Activated CD4-positive, alpha-beta T cell treated with anti-CD3 and anti-CD28 coated beads for 36 hours (primary cell): ENCODE measurements at regions of chr12 and their contacts with region 1.

Region 1: GRCh38 chr12:43776498-43776897 is 17.7 kb downstream of the IRAK4 start:
- DNase-seq: no peak
- ATAC-seq: peak; percentile 57
- H3K4me3 Mint-ChIP-seq: no peak overlapping the region
- H3K27ac Mint-ChIP-seq: no peak overlapping the region
- H3K4me1 Mint-ChIP-seq: no peaks in the 10 kb centered on the region
- H3K27me3 Mint-ChIP-seq: no peaks in the 10 kb centered on the region

Region 2: GRCh38 chr12:43766291-43766690 is 10.2 kb before region 1 on chr12:
- CTCF ChIA-PET with region 1: interaction called, 10 read pairs
- POLR2A ChIA-PET with region 1: no interaction called
- intact Hi-C with region 1: no loop called
- DNase-seq: no peak
- ATAC-seq: no peak
- H3K4me3 Mint-ChIP-seq: no peak overlapping the region
- H3K27ac Mint-ChIP-seq: no peak overlapping the region
- H3K4me1 Mint-ChIP-seq: peaks cover 26% of the 10 kb centered on the region
- H3K27me3 Mint-ChIP-seq: no peaks in the 10 kb centered on the region

Region 3: GRCh38 chr12:43882578-43883178 is 106.2 kb after region 1 on chr12:
- CTCF ChIA-PET with region 1: interaction called, 38 read pairs
- POLR2A ChIA-PET with region 1: no interaction called
- intact Hi-C with region 1: loop called (anchors 1 kb)
- DNase-seq: peak; percentile 27
- ATAC-seq: peak; percentile 65
- H3K4me3 Mint-ChIP-seq: no peak overlapping the region
- H3K27ac Mint-ChIP-seq: no peak overlapping the region
- H3K4me1 Mint-ChIP-seq: no peaks in the 10 kb centered on the region
- H3K27me3 Mint-ChIP-seq: no peaks in the 10 kb centered on the region